ENCODE measurements at regions of chr9 and their contacts with region 1.

Region 1: GRCh38 chr9:136363606-136364370 is at the start of gene DNLZ:
- DNase-seq: peak; percentile 87
- ATAC-seq: peak; percentile 40
- H3K4me3 Mint-ChIP-seq: peak within 1 kb of the TSS; percentile 71
- H3K27ac Mint-ChIP-seq: peak within 1 kb of the TSS; percentile 45
- H3K4me1 Mint-ChIP-seq: peaks cover 5% of the 10 kb centered on the region
- H3K27me3 Mint-ChIP-seq: no peaks in the 10 kb centered on the region
- CTCF ChIP-seq: peak; percentile 96
- total RNA-seq, gene DNLZ: 13.5 to 17.2 TPM (median 15.0 TPM) in 3 replicates

Region 2: GRCh38 chr9:136255896-136256890 is 107.6 kb before region 1 on chr9:
- CTCF ChIA-PET with region 1: no interaction called
- POLR2A ChIA-PET with region 1: no interaction called
- DNase-seq: no peak
- ATAC-seq: peak; percentile 62
- H3K4me3 Mint-ChIP-seq: no peak overlapping the region
- H3K27ac Mint-ChIP-seq: no peak overlapping the region
- H3K4me1 Mint-ChIP-seq: no peaks in the 10 kb centered on the region
- H3K27me3 Mint-ChIP-seq: no peaks in the 10 kb centered on the region
- CTCF ChIP-seq: no peak

Region 3: GRCh38 chr9:136312436-136312835 is 51.4 kb before region 1 on chr9:
- CTCF ChIA-PET with region 1: interaction called, 10 read pairs
- POLR2A ChIA-PET with region 1: interaction called, 3 read pairs
- DNase-seq: no peak
- ATAC-seq: peak; percentile 56
- H3K4me3 Mint-ChIP-seq: no peak overlapping the region
- H3K27ac Mint-ChIP-seq: no peak overlapping the region
- H3K4me1 Mint-ChIP-seq: no peaks in the 10 kb centered on the region
- H3K27me3 Mint-ChIP-seq: no peaks in the 10 kb centered on the region; the same call in 1 of the 2 replicates
- CTCF ChIP-seq: 0 out of 2 replicates have a peak, but pooled peaks have one; percentile 10

Region 4: DNA sequence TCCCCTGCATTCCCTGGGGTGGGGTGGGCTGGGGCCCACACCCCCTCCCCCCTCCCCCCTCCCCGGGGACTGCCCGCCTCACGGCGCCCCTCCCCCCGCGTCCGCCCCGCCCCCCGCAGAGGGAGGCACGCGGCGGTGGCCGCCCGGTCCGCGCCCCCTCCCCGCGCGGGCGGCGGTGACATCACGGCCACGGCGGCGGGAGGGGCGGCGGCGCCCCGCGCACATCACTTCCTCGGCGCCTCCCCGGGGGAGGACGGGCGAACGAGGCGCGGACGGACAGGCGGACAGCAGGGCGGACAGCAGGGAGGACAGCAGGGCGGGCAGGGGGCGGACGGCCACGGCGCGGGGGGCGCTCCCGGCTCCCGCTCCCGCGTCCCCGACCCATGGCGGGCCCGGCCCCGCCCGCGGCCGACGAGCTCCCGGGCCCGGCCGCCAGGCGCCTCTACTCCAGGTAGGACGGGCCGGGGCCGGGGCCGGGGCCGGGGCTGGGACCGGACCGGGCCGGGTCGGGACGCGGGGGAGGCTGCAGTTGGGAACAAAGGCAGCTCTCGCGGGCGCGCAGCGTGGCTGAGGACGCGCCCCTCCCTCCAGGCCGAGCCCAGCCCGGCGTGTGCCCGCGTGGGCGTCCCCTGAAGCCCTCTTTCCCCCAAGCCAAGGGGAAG is 36.3 kb before region 1 on chr9 and contains the start of gene GPSM1:
- CTCF ChIA-PET with region 1: interaction called, 17 read pairs
- POLR2A ChIA-PET with region 1: interaction called, 8 read pairs
- DNase-seq: no peak
- ATAC-seq: peak; percentile 25
- H3K4me3 Mint-ChIP-seq: peak within 1 kb of the TSS; percentile 56
- H3K27ac Mint-ChIP-seq: no peak within 1 kb of the TSS
- H3K4me1 Mint-ChIP-seq: peaks cover 7% of the 10 kb centered on the region
- H3K27me3 Mint-ChIP-seq: no peaks in the 10 kb centered on the region
- CTCF ChIP-seq: no peak
- total RNA-seq, gene GPSM1: 14.2 to 16.2 TPM (median 16.2 TPM) in 3 replicates

Region 5: DNA sequence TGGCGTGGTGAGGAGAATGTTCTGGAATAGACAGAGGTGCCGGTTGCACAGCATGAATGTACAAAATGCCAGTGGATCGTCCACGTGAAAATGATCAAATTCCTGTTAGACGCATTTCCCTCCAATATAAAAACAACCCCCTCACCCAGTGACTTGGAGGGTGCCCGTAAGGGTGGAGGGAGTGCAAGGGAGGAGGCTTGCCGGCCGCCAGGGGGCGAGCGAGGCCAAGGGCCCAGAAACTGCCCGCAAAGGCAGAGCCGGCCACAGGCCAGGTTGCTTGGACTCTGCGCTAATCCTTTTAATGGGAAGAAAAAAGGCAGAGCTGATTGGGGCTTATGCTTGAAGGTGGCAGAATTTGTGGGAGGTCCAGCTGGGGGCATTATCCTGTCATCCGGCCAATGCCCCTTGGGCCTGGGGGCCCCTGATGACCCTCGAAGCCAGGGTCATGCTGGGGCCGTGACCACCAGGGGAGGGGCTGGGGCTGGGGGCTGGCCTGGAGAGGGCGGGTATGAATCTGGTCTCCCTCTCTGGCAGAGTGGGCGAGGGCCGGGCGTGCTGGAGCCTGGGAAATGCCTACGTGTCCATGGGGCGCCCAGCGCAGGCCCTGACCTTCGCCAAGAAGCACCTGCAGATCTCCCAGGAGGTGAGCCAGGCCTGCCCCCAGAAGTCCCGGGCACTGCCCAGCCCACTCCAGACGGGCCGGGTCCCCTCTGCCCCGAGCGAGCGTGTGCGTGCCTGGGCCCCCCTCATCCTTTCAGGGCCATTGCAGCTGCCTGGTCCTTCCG is 24.4 kb before region 1 on chr9:
- CTCF ChIA-PET with region 1: interaction called, 36 read pairs
- POLR2A ChIA-PET with region 1: interaction called, 3 read pairs
- DNase-seq: peak; percentile 85
- ATAC-seq: peak; percentile 66
- H3K4me3 Mint-ChIP-seq: no peak overlapping the region
- H3K27ac Mint-ChIP-seq: no peak overlapping the region; the same call in 1 of the 2 replicates
- H3K4me1 Mint-ChIP-seq: no peaks in the 10 kb centered on the region
- H3K27me3 Mint-ChIP-seq: no peaks in the 10 kb centered on the region
- CTCF ChIP-seq: peak; percentile 94

Region 6: DNA sequence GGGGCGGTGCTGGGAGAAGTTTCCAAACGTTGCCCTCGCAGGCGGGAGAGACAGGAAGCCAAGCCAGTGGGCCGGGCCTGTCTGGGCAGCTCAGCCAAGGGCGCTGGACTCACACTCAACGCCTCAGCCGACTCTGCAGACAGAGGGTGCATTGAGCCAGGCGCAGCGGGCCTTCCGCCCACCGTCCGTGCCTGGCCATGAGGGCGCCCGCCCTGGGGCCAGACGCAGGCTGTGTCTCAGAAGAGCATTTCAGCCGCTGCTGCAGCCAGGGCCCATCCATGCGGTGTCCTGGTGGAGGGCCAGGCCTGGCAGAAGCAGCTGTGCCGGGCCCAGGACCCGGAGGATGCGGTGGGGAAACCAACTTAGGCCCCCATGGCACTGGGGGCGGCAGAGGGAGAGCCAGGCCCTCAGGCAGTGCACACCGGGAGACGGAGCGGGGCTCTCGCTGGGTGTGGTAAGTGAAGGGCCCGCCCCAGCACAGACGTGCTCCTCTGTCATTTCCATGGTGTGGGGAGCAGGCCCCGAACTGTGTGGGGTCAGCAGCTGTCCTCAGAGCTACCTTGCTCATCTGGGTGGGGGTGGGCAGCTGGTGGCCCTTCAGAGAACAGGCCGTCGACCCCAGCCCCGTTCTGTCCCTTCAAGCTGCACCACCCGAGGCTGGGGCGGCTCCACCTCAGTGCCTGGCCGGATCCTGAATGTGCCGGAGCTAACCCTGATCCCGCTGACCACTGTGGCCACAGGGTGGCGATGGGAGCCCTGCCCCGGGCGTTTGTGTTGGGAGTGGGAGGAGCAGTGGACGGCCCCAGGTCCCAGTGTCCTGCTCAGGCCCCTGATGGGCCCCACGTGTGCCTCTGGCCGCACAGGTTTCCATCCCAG is 18.3 kb before region 1 on chr9:
- CTCF ChIA-PET with region 1: interaction called, 41 read pairs
- POLR2A ChIA-PET with region 1: interaction called, 3 read pairs
- DNase-seq: peak; percentile 79
- ATAC-seq: peak; percentile 54
- H3K4me3 Mint-ChIP-seq: no peak overlapping the region
- H3K27ac Mint-ChIP-seq: no peak overlapping the region; the same call in 1 of the 2 replicates
- H3K4me1 Mint-ChIP-seq: no peaks in the 10 kb centered on the region
- H3K27me3 Mint-ChIP-seq: no peaks in the 10 kb centered on the region
- CTCF ChIP-seq: no peak

Region 7: GRCh38 chr9:136400038-136400834 is 36.4 kb after region 1 on chr9 and contains the start of gene SNAPC4:
- CTCF ChIA-PET with region 1: interaction called, 18 read pairs
- POLR2A ChIA-PET with region 1: interaction called, 3 read pairs
- DNase-seq: peak; percentile 91
- ATAC-seq: peak; percentile 89
- H3K4me3 Mint-ChIP-seq: peak within 1 kb of the TSS; percentile 88
- H3K27ac Mint-ChIP-seq: peak within 1 kb of the TSS; percentile 90
- H3K4me1 Mint-ChIP-seq: peaks cover 9% of the 10 kb centered on the region
- H3K27me3 Mint-ChIP-seq: no peaks in the 10 kb centered on the region
- CTCF ChIP-seq: peak; percentile 57; the same call in 1 of the 2 replicates
- total RNA-seq, gene SNAPC4: 18.9 to 22.8 TPM (median 20.0 TPM) in 3 replicates

Region 8: DNA sequence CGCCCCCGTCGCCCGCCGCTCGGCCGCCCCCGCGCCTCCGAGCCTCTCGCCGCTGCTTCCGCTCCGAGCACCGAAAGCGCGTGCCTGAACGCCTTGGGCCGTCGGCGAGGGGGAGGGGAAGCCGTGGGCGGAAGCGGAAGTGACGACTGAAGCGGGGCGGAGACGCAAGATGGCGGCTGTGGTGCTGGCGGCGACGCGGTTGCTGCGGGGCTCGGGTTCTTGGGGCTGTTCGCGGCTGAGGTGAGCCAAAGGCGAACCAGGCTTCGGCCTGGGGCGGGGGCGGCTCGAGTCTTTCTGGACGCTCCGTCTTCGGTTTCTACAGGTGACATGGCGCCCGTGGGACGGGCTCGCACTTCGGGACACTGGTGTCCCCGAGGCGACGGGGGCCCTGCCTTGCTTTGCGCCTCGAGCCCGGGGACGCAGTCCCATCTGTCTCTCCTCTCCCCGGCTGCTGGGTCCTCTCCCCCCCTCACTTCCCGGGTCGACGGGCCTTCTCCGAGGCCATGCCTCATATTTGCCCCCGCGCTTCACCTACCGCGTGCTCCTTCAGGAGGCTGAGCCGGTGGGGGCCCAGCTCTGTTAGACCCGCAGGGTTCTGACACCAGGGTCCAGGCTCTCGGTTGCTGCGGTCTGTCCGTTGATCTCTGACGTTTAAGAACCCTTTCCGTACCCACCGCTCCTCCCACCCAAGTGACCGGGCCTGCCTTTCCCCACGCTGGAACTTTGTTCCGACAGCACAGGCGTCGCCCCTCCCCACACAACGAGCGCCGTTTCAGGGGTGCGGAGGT is 46.9 kb after region 1 on chr9 and contains the starts of genes ENTR1 and PMPCA:
- CTCF ChIA-PET with region 1: interaction called, 10 read pairs
- POLR2A ChIA-PET with region 1: interaction called, 5 read pairs
- DNase-seq: peak; percentile 92
- ATAC-seq: peak; percentile 74
- H3K4me3 Mint-ChIP-seq: peak within 1 kb of the TSS; percentile 92
- H3K27ac Mint-ChIP-seq: peak within 1 kb of the TSS; percentile 90
- H3K4me1 Mint-ChIP-seq: peaks cover 27% of the 10 kb centered on the region
- H3K27me3 Mint-ChIP-seq: no peaks in the 10 kb centered on the region
- CTCF ChIP-seq: no peak
- total RNA-seq, gene ENTR1: 102 to 140 TPM (median 103 TPM) in 3 replicates
- total RNA-seq, gene PMPCA: 77.0 to 103 TPM (median 79.2 TPM) in 3 replicates

Measured in WTC11 (cell line).